MCF 10A (cell line): ENCODE measurements at regions of chr1 and their contacts with region 1.

Region 1: GRCh38 chr1:15723631-15724251 is 12.3 kb upstream of the SLC25A34 start:
- DNase-seq: no peak
- H3K4me3 Mint-ChIP-seq: no peak overlapping the region
- H3K27ac Mint-ChIP-seq: no peak overlapping the region
- H3K4me1 Mint-ChIP-seq: no peaks in the 10 kb centered on the region
- H3K27me3 Mint-ChIP-seq: no peaks in the 10 kb centered on the region
- CTCF ChIP-seq: no peak

Region 2: DNA sequence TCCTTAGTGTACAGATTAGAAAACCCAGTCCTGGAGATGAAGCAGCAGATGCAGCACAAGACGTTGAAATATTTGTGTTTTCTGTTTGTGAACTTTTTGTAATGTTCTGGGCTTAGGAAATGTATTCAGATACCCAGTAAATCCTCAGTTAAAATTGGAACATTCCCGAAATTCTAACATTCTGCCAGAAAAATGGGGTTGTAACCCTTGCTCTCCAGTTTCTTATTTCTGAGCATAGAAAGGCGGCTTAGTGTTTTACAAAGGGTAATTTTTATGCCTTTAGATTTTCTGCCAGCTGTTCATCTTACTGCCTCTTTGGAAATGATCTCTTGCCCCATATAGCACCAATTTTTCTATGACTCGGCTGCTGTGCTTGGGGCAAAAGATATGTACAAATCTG is 85.9 kb before region 1 on chr1:
- CTCF ChIA-PET with region 1: no interaction called
- POLR2A ChIA-PET with region 1: no interaction called
- intact Hi-C with region 1: no loop called
- DNase-seq: no peak
- H3K4me3 Mint-ChIP-seq: no peak overlapping the region
- H3K27ac Mint-ChIP-seq: no peak overlapping the region
- H3K4me1 Mint-ChIP-seq: no peaks in the 10 kb centered on the region
- H3K27me3 Mint-ChIP-seq: no peaks in the 10 kb centered on the region
- CTCF ChIP-seq: no peak

Region 3: GRCh38 chr1:15691434-15692032 is 32.2 kb before region 1 on chr1:
- CTCF ChIA-PET with region 1: no interaction called
- POLR2A ChIA-PET with region 1: no interaction called
- intact Hi-C with region 1: no loop called
- DNase-seq: no peak
- H3K4me3 Mint-ChIP-seq: no peak overlapping the region
- H3K27ac Mint-ChIP-seq: no peak overlapping the region
- H3K4me1 Mint-ChIP-seq: no peaks in the 10 kb centered on the region
- H3K27me3 Mint-ChIP-seq: no peaks in the 10 kb centered on the region
- CTCF ChIP-seq: no peak

Region 4: GRCh38 chr1:15741183-15741850 is 17.6 kb after region 1 on chr1:
- CTCF ChIA-PET with region 1: interaction called, 10 read pairs
- POLR2A ChIA-PET with region 1: interaction called, 4 read pairs
- intact Hi-C with region 1: no loop called
- DNase-seq: peak; percentile 86
- H3K4me3 Mint-ChIP-seq: no peak overlapping the region
- H3K27ac Mint-ChIP-seq: no peak overlapping the region
- H3K4me1 Mint-ChIP-seq: peaks cover 7% of the 10 kb centered on the region
- H3K27me3 Mint-ChIP-seq: no peaks in the 10 kb centered on the region
- CTCF ChIP-seq: peak; percentile 92